Activated CD4-positive, alpha-beta T cell treated with anti-CD3 and anti-CD28 coated beads for 36 hours (primary cell): ENCODE measurements at regions of chr10 and their contacts with region 1.

Region 1: GRCh38 chr10:27742195-27743011 is 3.2 kb downstream of the MKX start:
- DNase-seq: peak; percentile 92
- ATAC-seq: peak; percentile 91
- H3K4me3 Mint-ChIP-seq: peak overlapping the region; percentile 65
- H3K27ac Mint-ChIP-seq: peak overlapping the region; percentile 47
- H3K4me1 Mint-ChIP-seq: peaks cover 33% of the 10 kb centered on the region
- H3K27me3 Mint-ChIP-seq: peaks cover 56% of the 10 kb centered on the region

Region 2: GRCh38 chr10:26437637-26438461 is 1304.6 kb before region 1 on chr10 and contains the start of gene APBB1IP:
- CTCF ChIA-PET with region 1: no interaction called
- POLR2A ChIA-PET with region 1: no interaction called
- intact Hi-C with region 1: loop called in 1 of 2 experiments (anchors 5 kb)
- DNase-seq: peak; percentile 73
- ATAC-seq: peak; percentile 56
- H3K4me3 Mint-ChIP-seq: peak within 1 kb of the TSS; percentile 89
- H3K27ac Mint-ChIP-seq: peak within 1 kb of the TSS; percentile 97
- H3K4me1 Mint-ChIP-seq: peaks cover 49% of the 10 kb centered on the region
- H3K27me3 Mint-ChIP-seq: no peaks in the 10 kb centered on the region
- total RNA-seq, gene APBB1IP: 53.3 to 66.4 TPM

Region 3: DNA sequence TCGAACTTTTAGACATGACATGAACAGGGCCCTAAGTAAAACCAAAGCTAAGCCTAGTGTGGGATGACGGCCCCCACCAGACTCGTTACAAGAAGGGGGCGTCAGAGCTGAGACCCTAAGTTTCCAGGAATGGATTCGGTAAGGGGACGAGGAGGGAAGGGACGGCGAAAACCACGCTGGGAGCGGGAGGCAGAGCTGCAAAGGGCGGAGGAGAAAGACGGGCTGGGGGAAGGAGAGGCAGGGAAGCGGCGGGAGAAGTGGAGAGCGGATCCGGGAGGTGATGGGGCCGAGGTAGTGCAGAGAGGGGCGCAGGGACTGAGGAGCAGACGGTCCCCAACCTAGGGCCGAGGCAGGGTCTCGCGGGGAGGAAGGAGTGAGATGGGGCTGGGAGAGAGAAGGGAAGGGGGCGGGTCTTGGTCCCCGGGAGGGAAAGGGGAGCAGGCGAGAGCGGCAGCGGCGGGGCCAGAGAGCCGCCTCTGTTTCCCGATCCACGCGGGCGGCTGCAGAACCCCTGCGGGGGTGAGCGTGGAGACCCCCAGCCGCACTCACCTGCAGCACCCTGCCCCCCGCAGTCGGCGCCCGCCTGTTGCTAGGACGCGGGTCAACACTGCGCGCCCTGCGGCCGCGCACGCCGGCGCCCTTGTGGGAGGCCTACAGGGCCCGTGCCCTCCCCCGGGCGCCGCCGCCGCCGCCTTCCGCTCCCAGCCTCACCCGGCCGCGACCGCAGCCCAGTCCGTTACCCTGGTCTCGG is 256.0 kb after region 1 on chr10:
- CTCF ChIA-PET with region 1: no interaction called
- POLR2A ChIA-PET with region 1: no interaction called
- intact Hi-C with region 1: loop called in 1 of 2 experiments (anchors 5 kb)
- DNase-seq: peak; percentile 53
- ATAC-seq: peak; percentile 75
- H3K4me3 Mint-ChIP-seq: peak overlapping the region; percentile 72
- H3K27ac Mint-ChIP-seq: peak overlapping the region; percentile 7
- H3K4me1 Mint-ChIP-seq: peaks cover 10% of the 10 kb centered on the region
- H3K27me3 Mint-ChIP-seq: peaks cover 34% of the 10 kb centered on the region

Region 4: DNA sequence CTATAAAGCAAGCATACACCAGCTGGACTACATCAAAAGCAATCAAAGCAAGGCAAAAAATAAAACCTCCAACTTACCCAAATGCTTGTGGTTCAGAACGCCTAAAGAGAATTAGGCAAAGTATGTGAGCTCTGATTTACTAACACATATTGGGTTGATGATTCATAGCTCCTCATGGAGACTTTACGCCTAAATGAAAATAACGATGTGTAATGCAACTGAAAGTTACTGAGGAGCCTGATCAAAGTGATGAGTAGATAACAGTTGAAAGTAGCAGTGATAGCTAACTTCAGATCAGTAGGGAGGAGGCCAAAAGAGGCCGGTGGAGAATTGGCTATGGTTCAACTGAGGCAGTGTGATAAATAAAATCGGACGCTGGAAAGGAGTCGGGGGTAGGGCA is 475.4 kb after region 1 on chr10:
- CTCF ChIA-PET with region 1: no interaction called
- POLR2A ChIA-PET with region 1: no interaction called
- intact Hi-C with region 1: loop called (anchors 1 kb)
- DNase-seq: peak; percentile 39
- ATAC-seq: peak; percentile 98
- H3K4me3 Mint-ChIP-seq: no peak overlapping the region
- H3K27ac Mint-ChIP-seq: no peak overlapping the region
- H3K4me1 Mint-ChIP-seq: peaks cover 39% of the 10 kb centered on the region
- H3K27me3 Mint-ChIP-seq: no peaks in the 10 kb centered on the region

Region 5: GRCh38 chr10:28302638-28303488 is 560.5 kb after region 1 on chr10 and contains the start of gene MPP7:
- CTCF ChIA-PET with region 1: interaction called, 5 read pairs
- POLR2A ChIA-PET with region 1: no interaction called
- intact Hi-C with region 1: loop called in 1 of 2 experiments (anchors 1 kb)
- DNase-seq: peak; percentile 97
- ATAC-seq: peak; percentile 97
- H3K4me3 Mint-ChIP-seq: peak within 1 kb of the TSS; percentile 90
- H3K27ac Mint-ChIP-seq: peak within 1 kb of the TSS; percentile 80
- H3K4me1 Mint-ChIP-seq: peaks cover 49% of the 10 kb centered on the region
- H3K27me3 Mint-ChIP-seq: no peaks in the 10 kb centered on the region
- total RNA-seq, gene MPP7: 10.9 to 11.0 TPM

Region 6: DNA sequence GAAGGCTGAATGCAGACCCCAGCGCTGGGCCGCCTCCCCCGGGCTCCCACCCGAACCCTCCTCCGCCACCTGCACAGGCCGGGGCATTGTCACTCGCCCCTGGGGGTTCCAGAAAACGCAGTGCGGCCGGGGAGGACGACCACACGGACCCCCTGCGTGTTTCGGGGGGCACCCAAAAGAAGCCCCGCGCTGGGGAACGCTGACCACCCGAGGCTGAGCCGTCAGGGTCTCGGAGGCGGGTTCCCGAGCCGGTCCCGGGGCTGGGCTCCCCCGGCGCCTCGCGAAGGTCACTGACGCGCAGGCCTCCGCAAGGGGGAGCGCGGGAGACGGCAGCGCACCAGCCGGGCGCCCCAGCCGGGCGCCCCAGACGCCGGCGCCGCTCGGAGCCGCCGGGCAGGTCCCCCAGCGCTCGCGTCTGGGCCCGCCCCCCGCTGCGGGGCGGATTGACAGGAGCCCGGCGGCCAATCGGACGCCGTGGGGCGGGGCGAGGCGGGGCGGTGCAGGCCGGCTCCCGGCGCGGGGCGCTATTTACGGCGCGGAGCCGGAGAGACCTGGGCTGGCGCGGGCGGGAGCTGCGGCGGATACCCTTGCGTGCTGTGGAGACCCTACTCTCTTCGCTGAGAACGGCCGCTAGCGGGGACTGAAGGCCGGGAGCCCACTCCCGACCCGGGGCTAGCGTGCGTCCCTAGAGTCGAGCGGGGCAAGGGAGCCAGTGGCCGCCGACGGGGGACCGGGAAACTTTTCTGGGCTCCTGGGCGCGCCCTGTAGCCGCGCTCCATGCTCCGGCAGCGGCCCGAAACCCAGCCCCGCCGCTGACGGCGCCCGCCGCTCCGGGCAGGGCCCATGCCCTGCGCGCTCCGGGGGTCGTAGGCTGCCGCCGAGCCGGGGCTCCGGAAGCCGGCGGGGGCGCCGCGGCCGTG is 934.8 kb after region 1 on chr10 and contains the start of gene BAMBI:
- CTCF ChIA-PET with region 1: no interaction called
- POLR2A ChIA-PET with region 1: no interaction called
- intact Hi-C with region 1: loop called in 1 of 2 experiments (anchors 1 kb)
- DNase-seq: peak; percentile 95
- ATAC-seq: peak; percentile 99
- H3K4me3 Mint-ChIP-seq: peak within 1 kb of the TSS; percentile 68
- H3K27ac Mint-ChIP-seq: no peak within 1 kb of the TSS
- H3K4me1 Mint-ChIP-seq: peaks cover 31% of the 10 kb centered on the region
- H3K27me3 Mint-ChIP-seq: peaks cover 50% of the 10 kb centered on the region
- total RNA-seq, gene BAMBI: 0.09 to 0.16 TPM